Activated CD4-positive, alpha-beta T cell treated with anti-CD3 and anti-CD28 coated beads for 36 hours (primary cell): ENCODE measurements at regions of chr18 and their contacts with region 1.

Region 1: GRCh38 chr18:71405169-71405809 is 1116.4 kb downstream of the SOCS6 start:
- DNase-seq: no peak
- ATAC-seq: no peak
- H3K4me3 Mint-ChIP-seq: no peak overlapping the region
- H3K27ac Mint-ChIP-seq: no peak overlapping the region
- H3K4me1 Mint-ChIP-seq: no peaks in the 10 kb centered on the region
- H3K27me3 Mint-ChIP-seq: no peaks in the 10 kb centered on the region

Region 2: DNA sequence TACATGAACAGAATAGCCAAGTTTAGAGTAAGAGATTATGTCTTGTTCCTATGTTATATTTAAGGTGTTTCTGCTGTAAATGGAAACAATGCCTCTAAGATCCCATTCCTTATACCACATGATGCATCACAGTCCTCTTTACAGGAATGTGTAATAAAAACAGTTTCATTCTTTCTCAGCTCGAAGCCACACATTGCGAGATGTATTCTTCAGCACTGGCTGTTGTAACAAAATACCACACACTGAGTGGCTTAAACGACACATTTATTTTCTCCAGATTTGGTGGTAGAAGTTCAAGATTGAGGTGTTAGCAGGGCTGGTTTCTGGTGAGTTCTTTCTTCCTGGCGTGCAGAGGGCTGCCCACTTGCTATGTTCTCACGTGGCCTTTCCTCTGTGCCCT is 870.2 kb before region 1 on chr18:
- CTCF ChIA-PET with region 1: no interaction called
- POLR2A ChIA-PET with region 1: interaction called, 10 read pairs
- intact Hi-C with region 1: no loop called
- DNase-seq: no peak
- ATAC-seq: peak; percentile 44
- H3K4me3 Mint-ChIP-seq: no peak overlapping the region
- H3K27ac Mint-ChIP-seq: no peak overlapping the region
- H3K4me1 Mint-ChIP-seq: peaks cover 3% of the 10 kb centered on the region
- H3K27me3 Mint-ChIP-seq: no peaks in the 10 kb centered on the region